ENCODE measurements at regions of chr7 and their contacts with region 1.

Region 1: GRCh38 chr7:105261688-105262087 is 127.0 kb downstream of the SRPK2 start:
- DNase-seq: no peak
- ATAC-seq: peak; percentile 34 to 72 (median 49)
- H3K4me3 ChIP-seq: no peak overlapping the region
- H3K27ac ChIP-seq: no peak overlapping the region
- H3K4me1 ChIP-seq: peaks cover 0 to 31% (median 17%) of the 10 kb centered on the region in 12 donors
- H3K27me3 ChIP-seq: no peaks in the 10 kb centered on the region
- CTCF ChIP-seq: no peak
- POLR2A ChIP-seq: no peak

Region 2: GRCh38 chr7:105210721-105211205 is 50.9 kb before region 1 on chr7:
- intact Hi-C with region 1: loop called in 3 of 10 experiments (anchors 5 to 10 kb)
- DNase-seq: peak in 4 of 5 donors; percentile 36 to 58 (median 48)
- ATAC-seq: peak; percentile 63 to 89 (median 86)
- H3K4me3 ChIP-seq: peak overlapping the region in 2 of 12 donors; percentile 2 to 19
- H3K27ac ChIP-seq: peak overlapping the region in 10 of 12 donors; percentile 0 to 50 (median 16)
- H3K4me1 ChIP-seq: peaks cover 0 to 40% (median 19%) of the 10 kb centered on the region in 12 donors
- H3K27me3 ChIP-seq: no peaks in the 10 kb centered on the region
- CTCF ChIP-seq: peak in 1 of 12 donors; percentile 19
- POLR2A ChIP-seq: no peak

Measured in heart left ventricle (tissue), 16 donors.